Activated naive CD4-positive, alpha-beta T cell treated with anti-CD3 and anti-CD28 coated beads for 36 hours (primary cell): ENCODE measurements at regions of chr10 and their contacts with region 1.

Region 1: DNA sequence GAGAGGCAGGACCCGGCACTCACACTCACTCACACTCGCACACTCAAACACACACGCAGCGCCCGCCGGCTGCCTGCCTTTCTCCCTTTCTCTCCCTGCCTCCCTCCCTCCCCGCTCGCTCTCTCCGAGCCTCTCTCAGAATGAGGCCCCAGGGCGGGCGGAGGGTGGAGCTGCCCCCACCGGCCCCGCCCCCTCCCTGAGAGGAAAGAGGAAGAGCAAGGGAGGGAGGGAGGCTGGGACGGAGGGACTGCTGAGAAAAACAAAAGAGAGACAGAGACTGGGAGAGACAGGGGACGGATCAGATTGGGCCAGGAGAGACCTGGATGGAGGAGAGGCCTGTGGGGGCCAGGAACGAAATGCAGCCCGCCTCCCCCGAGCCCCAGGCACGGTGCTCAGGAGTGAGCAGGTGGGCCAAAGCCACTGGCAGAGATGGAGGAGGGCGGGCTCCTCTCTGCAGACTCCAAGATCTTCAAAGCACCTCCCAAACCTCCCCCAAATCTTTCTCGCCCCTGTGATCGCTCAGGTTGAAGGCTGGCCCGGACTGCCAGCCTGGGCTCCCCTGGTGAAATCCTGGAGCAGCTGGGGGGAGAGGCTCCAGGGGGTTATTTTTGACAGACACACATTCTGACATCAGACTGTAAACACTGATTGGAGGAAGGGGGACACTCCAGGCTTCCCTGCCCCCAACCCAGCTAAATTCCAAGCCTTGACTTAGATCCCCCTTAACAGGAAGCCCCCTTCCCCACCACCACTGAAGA is 5.1 kb downstream of the LDB1 start:
- DNase-seq: peak; percentile 92
- H3K4me3 Mint-ChIP-seq: peak overlapping the region; percentile 93
- H3K27ac Mint-ChIP-seq: peak overlapping the region; percentile 98
- H3K4me1 Mint-ChIP-seq: peaks cover 53% of the 10 kb centered on the region
- H3K27me3 Mint-ChIP-seq: no peaks in the 10 kb centered on the region

Region 2: DNA sequence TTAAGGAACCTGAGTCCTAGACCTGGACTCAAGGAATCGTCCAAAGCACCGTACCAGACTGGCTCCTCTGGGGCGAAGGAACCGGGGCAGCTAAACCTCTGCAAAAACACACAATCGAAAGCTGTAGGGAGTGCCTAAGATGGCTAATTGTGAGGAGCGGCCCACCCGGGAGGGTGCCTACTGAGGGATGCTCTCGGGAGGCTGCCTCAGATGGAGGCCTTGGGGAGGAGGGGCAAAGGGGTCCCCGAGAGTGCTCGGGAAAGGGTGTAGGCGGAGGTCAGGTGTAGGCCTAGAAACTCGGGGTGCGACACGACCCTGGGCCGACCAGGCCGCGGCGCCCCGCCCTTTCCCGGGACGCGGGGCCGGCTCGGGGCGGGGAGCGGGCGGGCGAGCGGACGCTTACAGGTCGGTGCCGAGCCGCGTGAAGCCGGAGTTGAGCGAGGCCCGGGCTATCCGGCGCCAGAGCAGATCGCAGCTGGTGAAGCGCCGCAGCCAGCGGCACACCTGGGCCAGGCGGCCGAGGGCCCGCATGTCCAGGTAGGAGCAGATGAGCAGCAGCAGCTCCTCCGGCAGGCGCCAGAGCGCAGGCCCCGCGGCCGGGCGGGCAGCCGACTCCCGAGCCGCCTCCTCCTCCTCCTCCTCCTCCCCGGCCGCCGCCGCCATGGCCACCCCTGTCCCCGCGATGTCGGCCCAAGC is 420.9 kb before region 1 on chr10:
- CTCF ChIA-PET with region 1: no interaction called
- intact Hi-C with region 1: loop called (anchors 5 kb)
- DNase-seq: peak; percentile 56
- H3K4me3 Mint-ChIP-seq: peak overlapping the region; percentile 97
- H3K27ac Mint-ChIP-seq: peak overlapping the region; percentile 97
- H3K4me1 Mint-ChIP-seq: peaks cover 38% of the 10 kb centered on the region
- H3K27me3 Mint-ChIP-seq: no peaks in the 10 kb centered on the region

Region 3: GRCh38 chr10:102055647-102056419 is 59.2 kb before region 1 on chr10 and contains the start of gene ARMH3:
- CTCF ChIA-PET with region 1: no interaction called
- intact Hi-C with region 1: loop called (anchors 2 kb)
- DNase-seq: peak; percentile 96
- H3K4me3 Mint-ChIP-seq: peak within 1 kb of the TSS; percentile 91
- H3K27ac Mint-ChIP-seq: peak within 1 kb of the TSS; percentile 90
- H3K4me1 Mint-ChIP-seq: peaks cover 41% of the 10 kb centered on the region
- H3K27me3 Mint-ChIP-seq: no peaks in the 10 kb centered on the region
- total RNA-seq, gene ARMH3: 12.3 to 12.6 TPM

Region 4: GRCh38 chr10:102064868-102065560 is 50.0 kb before region 1 on chr10 and contains the start of gene HPS6:
- CTCF ChIA-PET with region 1: interaction called, 3 read pairs
- intact Hi-C with region 1: loop called (anchors 1 kb)
- DNase-seq: peak; percentile 91
- H3K4me3 Mint-ChIP-seq: peak within 1 kb of the TSS; percentile 83
- H3K27ac Mint-ChIP-seq: peak within 1 kb of the TSS; percentile 88
- H3K4me1 Mint-ChIP-seq: peaks cover 24% of the 10 kb centered on the region
- H3K27me3 Mint-ChIP-seq: no peaks in the 10 kb centered on the region
- total RNA-seq, gene HPS6: 8.7 to 8.8 TPM

Region 5: GRCh38 chr10:102132563-102133372 is 17.7 kb after region 1 on chr10 and contains the start of gene PPRC1:
- CTCF ChIA-PET with region 1: interaction called, 24 read pairs
- intact Hi-C with region 1: loop called (anchors 1 kb)
- DNase-seq: peak; percentile 99
- H3K4me3 Mint-ChIP-seq: peak within 1 kb of the TSS; percentile 97
- H3K27ac Mint-ChIP-seq: peak within 1 kb of the TSS; percentile 96
- H3K4me1 Mint-ChIP-seq: peaks cover 42% of the 10 kb centered on the region
- H3K27me3 Mint-ChIP-seq: no peaks in the 10 kb centered on the region
- total RNA-seq, gene PPRC1: 54.6 to 55.0 TPM

Region 6: GRCh38 chr10:102151774-102152544 is 36.9 kb after region 1 on chr10 and contains the start of gene NOLC1:
- CTCF ChIA-PET with region 1: no interaction called
- intact Hi-C with region 1: loop called (anchors 1 kb)
- DNase-seq: peak; percentile 100
- H3K4me3 Mint-ChIP-seq: peak within 1 kb of the TSS; percentile 98
- H3K27ac Mint-ChIP-seq: peak within 1 kb of the TSS; percentile 96
- H3K4me1 Mint-ChIP-seq: peaks cover 53% of the 10 kb centered on the region
- H3K27me3 Mint-ChIP-seq: no peaks in the 10 kb centered on the region
- total RNA-seq, gene NOLC1: 182 to 194 TPM

Region 7: GRCh38 chr10:102291221-102291905 is 176.3 kb after region 1 on chr10:
- CTCF ChIA-PET with region 1: no interaction called
- intact Hi-C with region 1: no loop called
- DNase-seq: no peak
- H3K4me3 Mint-ChIP-seq: no peak overlapping the region
- H3K27ac Mint-ChIP-seq: no peak overlapping the region
- H3K4me1 Mint-ChIP-seq: peaks cover 17% of the 10 kb centered on the region
- H3K27me3 Mint-ChIP-seq: no peaks in the 10 kb centered on the region